Endothelial cell of umbilical vein (primary cell): ENCODE measurements at regions of chr17 and their contacts with region 1.

Region 1: DNA sequence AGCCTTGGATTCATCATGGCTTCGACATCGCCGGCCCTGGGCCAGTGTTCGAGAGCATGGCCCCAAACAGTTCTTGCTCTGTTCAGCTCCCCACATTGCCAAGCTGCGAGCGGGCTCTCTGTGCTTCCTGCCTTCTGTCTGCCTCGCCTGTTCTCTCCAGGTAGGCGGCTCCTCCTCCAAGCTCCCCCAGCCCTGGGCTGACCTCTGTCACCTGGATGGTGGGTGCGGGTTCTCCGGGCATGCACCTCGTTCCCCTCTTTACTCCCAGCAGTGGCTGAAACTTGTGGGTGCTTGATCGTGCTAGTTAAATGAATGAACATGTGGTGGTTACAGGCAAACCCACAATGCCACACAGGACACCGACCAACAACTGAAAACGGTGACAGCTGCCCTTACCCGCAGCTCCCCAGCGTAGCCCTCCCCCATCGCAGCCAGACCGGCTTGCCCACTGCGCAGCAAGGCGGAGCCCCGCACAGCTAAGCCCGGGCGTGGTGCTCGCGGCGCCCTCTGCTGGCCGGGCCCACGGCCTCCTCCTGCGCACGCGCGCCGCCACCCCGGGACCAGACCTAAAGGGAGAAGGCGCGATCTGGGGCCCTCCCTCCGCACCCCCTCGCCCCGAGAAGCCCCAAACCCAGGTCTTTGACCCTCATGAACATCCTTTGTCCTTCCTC is 23.0 kb upstream of the EIF1 start:
- DNase-seq: peak; percentile 83
- H3K4me3 ChIP-seq: peak overlapping the region in 2 of 3 experiments; percentile 13 to 32
- H3K27ac ChIP-seq: peak overlapping the region; percentile 49
- H3K4me1 ChIP-seq: peaks cover 23% of the 10 kb centered on the region
- H3K27me3 ChIP-seq: no peaks in the 10 kb centered on the region
- CTCF ChIP-seq: peak; percentile 96 to 99
- POLR2A ChIP-seq: no peak

Region 2: DNA sequence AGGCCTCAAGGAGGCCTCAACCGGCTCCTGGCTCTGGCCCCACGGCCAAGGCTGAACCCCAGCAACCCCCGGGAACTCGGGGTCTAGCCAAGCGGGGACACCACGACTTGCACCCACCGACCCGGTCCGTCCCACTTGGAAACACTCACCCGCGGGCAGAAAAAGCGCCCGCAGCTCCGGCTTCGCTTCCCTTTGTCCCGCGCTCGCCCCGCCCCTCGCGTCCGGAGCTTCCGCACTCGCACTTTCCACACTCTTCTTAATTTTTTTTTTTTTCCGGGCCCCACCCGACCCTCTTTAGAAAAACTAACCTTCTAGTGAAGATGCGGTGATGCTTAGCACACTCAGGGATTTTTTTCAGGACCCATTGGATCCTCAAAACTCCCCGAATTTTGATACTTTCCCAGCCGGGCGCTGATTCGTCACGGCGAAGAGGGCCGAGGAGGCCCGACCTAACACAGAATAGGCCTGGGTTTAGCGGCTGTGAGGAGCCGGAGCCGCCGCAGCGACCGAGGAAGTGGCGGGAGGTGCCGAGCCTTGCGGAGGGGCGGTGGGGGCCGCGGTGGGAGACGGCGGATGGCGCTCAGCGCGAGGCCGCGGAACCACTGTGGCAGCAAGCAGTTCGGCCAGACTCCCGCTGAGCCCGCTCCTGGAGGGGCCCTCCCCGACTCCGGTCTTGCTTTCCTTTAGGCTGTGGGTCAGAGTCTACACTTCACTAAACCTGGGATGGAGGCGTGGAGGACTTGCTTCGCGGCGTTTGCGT is 1017.9 kb before region 1 on chr17 and contains the start of gene SMARCE1:
- CTCF ChIA-PET with region 1: interaction called, 4 read pairs
- POLR2A ChIA-PET with region 1: no interaction called
- dilution Hi-C with region 1: no loop called
- intact Hi-C with region 1: loop called (anchors 10 kb)
- DNase-seq: peak; percentile 83
- H3K4me3 ChIP-seq: peak within 1 kb of the TSS; percentile 62 to 100 (median 100)
- H3K27ac ChIP-seq: peak within 1 kb of the TSS; percentile 96
- H3K4me1 ChIP-seq: peaks cover 22% of the 10 kb centered on the region
- H3K27me3 ChIP-seq: no peaks in the 10 kb centered on the region
- CTCF ChIP-seq: no peak
- POLR2A ChIP-seq: peak; percentile 66
- total RNA-seq, gene SMARCE1: 120 and 127 TPM in 2 replicates

Region 3: GRCh38 chr17:40854159-40854814 is 811.4 kb before region 1 on chr17:
- CTCF ChIA-PET with region 1: interaction called, 177 read pairs
- POLR2A ChIA-PET with region 1: no interaction called
- dilution Hi-C with region 1: no loop called
- intact Hi-C with region 1: loop called (anchors 1 kb)
- DNase-seq: peak; percentile 59
- H3K4me3 ChIP-seq: no peak overlapping the region
- H3K27ac ChIP-seq: no peak overlapping the region
- H3K4me1 ChIP-seq: peaks cover 8% of the 10 kb centered on the region
- H3K27me3 ChIP-seq: peaks cover 2 to 5% of the 10 kb centered on the region in 2 experiments
- CTCF ChIP-seq: no peak
- POLR2A ChIP-seq: no peak

Region 4: GRCh38 chr17:41322094-41322902 is 343.4 kb before region 1 on chr17:
- CTCF ChIA-PET with region 1: interaction called, 9 read pairs
- POLR2A ChIA-PET with region 1: no interaction called
- dilution Hi-C with region 1: no loop called
- intact Hi-C with region 1: loop called (anchors 10 kb)
- DNase-seq: peak; percentile 49
- H3K4me3 ChIP-seq: no peak overlapping the region
- H3K27ac ChIP-seq: no peak overlapping the region
- H3K4me1 ChIP-seq: no peaks in the 10 kb centered on the region
- H3K27me3 ChIP-seq: peaks cover 0 to 2% of the 10 kb centered on the region in 2 experiments
- CTCF ChIP-seq: peak; percentile 40 to 69
- POLR2A ChIP-seq: no peak

Region 5: GRCh38 chr17:41530062-41531051 is 135.3 kb before region 1 on chr17:
- CTCF ChIA-PET with region 1: interaction called, 14 read pairs
- POLR2A ChIA-PET with region 1: no interaction called
- dilution Hi-C with region 1: no loop called
- intact Hi-C with region 1: no loop called
- DNase-seq: peak; percentile 90
- H3K4me3 ChIP-seq: no peak overlapping the region
- H3K27ac ChIP-seq: peak overlapping the region; percentile 80
- H3K4me1 ChIP-seq: peaks cover 29% of the 10 kb centered on the region
- H3K27me3 ChIP-seq: no peaks in the 10 kb centered on the region
- CTCF ChIP-seq: no peak
- POLR2A ChIP-seq: peak; percentile 62

Region 6: DNA sequence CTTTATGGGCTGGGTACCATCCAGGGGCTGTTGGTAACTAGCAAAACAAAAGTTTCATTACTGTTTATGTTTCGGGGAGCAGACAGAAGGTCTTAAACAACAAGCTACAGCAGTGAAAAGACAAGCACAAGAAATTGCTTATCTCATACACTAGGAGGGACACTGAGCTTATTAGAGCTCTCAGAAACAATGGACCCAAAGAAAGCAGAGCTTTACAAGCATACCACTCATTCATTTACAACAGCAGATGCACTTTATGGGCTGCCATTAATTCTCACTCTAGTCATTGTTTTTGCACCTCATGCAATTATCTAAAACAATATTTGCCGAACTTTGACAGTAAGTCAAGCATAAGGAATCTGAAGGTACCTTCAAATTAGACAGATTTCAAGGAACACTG is 63.2 kb before region 1 on chr17:
- CTCF ChIA-PET with region 1: no interaction called
- POLR2A ChIA-PET with region 1: no interaction called
- dilution Hi-C with region 1: no loop called
- intact Hi-C with region 1: no loop called
- DNase-seq: no peak
- H3K4me3 ChIP-seq: no peak overlapping the region
- H3K27ac ChIP-seq: no peak overlapping the region
- H3K4me1 ChIP-seq: no peaks in the 10 kb centered on the region
- H3K27me3 ChIP-seq: peaks cover 7 to 11% of the 10 kb centered on the region in 2 experiments
- CTCF ChIP-seq: no peak
- POLR2A ChIP-seq: no peak

Region 7: GRCh38 chr17:41642252-41643156 is 23.2 kb before region 1 on chr17:
- CTCF ChIA-PET with region 1: interaction called, 303 read pairs
- POLR2A ChIA-PET with region 1: no interaction called
- dilution Hi-C with region 1: no loop called
- intact Hi-C with region 1: no loop called
- DNase-seq: no peak
- H3K4me3 ChIP-seq: no peak overlapping the region
- H3K27ac ChIP-seq: no peak overlapping the region
- H3K4me1 ChIP-seq: no peaks in the 10 kb centered on the region
- H3K27me3 ChIP-seq: no peaks in the 10 kb centered on the region
- CTCF ChIP-seq: no peak
- POLR2A ChIP-seq: no peak

Region 8: GRCh38 chr17:41688699-41689496 is 23.2 kb after region 1 on chr17 and contains the start of gene EIF1:
- CTCF ChIA-PET with region 1: interaction called, 26 read pairs
- POLR2A ChIA-PET with region 1: interaction called, 13 read pairs
- dilution Hi-C with region 1: no loop called
- intact Hi-C with region 1: loop called (anchors 1 kb)
- DNase-seq: peak; percentile 100
- H3K4me3 ChIP-seq: peak within 1 kb of the TSS; percentile 68 to 95 (median 73)
- H3K27ac ChIP-seq: peak within 1 kb of the TSS; percentile 97
- H3K4me1 ChIP-seq: peaks cover 20% of the 10 kb centered on the region
- H3K27me3 ChIP-seq: no peaks in the 10 kb centered on the region
- CTCF ChIP-seq: no peak
- POLR2A ChIP-seq: peak; percentile 95
- total RNA-seq, gene EIF1: 814 and 839 TPM in 2 replicates

Region 9: DNA sequence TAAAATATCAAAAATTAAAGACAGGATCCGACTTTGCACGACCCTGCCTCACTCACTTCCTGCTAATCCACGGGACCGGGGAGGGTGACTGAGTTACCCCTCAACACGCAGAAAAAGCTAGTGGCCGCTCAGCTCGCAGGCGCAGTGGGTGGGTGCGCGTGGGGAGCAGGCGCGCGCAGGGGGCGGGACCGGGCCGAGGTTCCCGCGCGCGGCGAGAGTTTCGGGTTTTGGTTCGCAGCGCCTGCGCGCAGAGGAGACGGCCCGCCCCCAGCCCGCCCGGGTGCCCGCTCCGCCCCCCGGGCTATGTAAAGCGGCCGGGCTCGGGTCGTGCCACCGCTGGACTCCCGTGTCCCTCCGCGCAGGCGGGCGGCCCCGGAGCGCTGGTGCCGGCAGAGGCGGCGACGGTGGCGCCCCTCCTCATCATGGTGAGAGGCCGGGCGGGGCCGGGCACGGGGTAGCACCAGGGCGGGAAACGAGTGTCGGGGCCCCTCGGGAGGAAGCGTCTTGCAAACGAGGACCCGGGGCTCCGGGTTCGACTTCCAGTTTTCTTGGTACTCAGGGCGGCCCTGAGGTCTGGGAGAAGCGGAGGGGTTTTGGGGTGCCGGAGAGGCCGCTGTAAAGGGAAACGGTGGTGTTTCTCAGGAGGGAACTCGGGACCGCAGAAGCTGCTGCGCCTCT is 300.9 kb after region 1 on chr17 and contains the start of gene CNP:
- CTCF ChIA-PET with region 1: no interaction called
- POLR2A ChIA-PET with region 1: no interaction called
- dilution Hi-C with region 1: no loop called
- intact Hi-C with region 1: no loop called
- DNase-seq: peak; percentile 91
- H3K4me3 ChIP-seq: peak within 1 kb of the TSS; percentile 74 to 93 (median 80)
- H3K27ac ChIP-seq: peak within 1 kb of the TSS; percentile 51
- H3K4me1 ChIP-seq: peaks cover 18% of the 10 kb centered on the region
- H3K27me3 ChIP-seq: no peaks in the 10 kb centered on the region
- CTCF ChIP-seq: no peak
- POLR2A ChIP-seq: peak; percentile 96
- total RNA-seq, gene CNP: 84.9 and 88.3 TPM in 2 replicates